ENCODE measurements at regions of chr11 and their contacts with region 1.

Region 1: DNA sequence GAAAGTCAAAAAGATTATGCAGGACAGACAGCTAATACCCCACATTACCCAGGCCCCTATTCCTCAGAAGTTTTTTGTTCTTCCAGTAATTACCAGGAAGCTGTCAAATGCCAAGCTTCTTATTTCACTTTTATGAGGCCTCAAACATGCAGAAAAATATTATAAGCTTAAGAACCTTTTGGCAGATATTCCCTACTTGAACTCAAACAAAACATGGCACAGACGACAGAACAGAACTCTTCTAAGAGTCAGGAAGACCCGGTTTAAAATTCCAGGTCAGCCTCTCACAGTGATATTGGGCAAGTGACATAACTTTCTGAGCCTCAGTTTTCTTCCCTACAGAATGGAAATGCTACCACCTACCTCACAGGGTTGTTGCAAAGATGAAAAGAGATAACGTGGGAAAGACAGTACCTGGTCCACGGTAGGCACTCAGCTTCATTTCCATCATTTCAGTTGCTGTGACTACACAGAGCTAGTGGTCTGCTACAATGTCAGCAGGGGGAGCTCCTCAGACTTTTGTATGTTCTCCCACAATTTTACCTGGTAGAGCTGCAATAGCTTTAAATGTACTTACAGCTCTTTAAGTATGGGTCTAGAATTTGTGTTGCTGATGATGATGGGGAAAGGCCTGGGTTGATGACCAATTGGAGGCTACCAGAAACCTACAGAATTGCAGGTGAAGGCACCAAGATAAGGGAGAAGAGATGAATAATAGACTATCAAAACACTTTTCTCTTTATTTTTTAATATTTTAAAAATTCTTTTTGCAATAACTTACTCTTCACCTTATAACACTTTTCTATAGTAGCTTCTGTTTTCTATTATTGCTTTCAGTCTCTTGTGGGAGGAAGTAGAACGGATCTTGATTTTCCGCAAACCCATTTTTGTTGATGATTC is 98.3 kb upstream of the CHRM4 start:
- DNase-seq: no peak
- H3K4me3 ChIP-seq: no peak overlapping the region
- H3K27me3 ChIP-seq: no peaks in the 10 kb centered on the region
- CTCF ChIP-seq: peak; percentile 67

Region 2: DNA sequence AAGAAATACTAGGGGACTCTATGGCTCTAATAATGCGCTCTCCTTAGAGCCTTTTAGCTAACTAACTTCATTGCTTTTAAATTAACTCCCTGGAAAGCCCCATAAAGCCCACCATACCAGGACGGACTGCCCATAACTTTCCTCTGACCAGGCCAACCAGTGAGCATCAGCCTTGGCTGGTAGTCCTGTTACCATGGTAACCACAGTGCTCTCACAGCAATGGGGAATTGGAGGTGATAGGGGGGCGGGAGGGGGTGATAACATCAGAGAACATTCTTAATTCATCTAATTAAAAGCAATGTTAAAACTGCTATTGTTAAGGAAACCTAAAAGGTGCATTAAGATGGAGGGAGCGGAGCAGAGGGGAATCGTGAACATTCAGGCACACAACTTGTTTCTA is 71.2 kb before region 1 on chr11:
- CTCF ChIA-PET with region 1: no interaction called
- POLR2A ChIA-PET with region 1: no interaction called
- DNase-seq: no peak
- H3K4me3 ChIP-seq: no peak overlapping the region
- H3K27me3 ChIP-seq: no peaks in the 10 kb centered on the region
- CTCF ChIP-seq: no peak

Region 3: GRCh38 chr11:46445920-46446771 is 43.8 kb before region 1 on chr11:
- CTCF ChIA-PET with region 1: interaction called, 9 read pairs
- POLR2A ChIA-PET with region 1: interaction called, 18 read pairs
- DNase-seq: no peak
- H3K4me3 ChIP-seq: no peak overlapping the region
- H3K27me3 ChIP-seq: no peaks in the 10 kb centered on the region
- CTCF ChIP-seq: peak; percentile 37

Region 4: DNA sequence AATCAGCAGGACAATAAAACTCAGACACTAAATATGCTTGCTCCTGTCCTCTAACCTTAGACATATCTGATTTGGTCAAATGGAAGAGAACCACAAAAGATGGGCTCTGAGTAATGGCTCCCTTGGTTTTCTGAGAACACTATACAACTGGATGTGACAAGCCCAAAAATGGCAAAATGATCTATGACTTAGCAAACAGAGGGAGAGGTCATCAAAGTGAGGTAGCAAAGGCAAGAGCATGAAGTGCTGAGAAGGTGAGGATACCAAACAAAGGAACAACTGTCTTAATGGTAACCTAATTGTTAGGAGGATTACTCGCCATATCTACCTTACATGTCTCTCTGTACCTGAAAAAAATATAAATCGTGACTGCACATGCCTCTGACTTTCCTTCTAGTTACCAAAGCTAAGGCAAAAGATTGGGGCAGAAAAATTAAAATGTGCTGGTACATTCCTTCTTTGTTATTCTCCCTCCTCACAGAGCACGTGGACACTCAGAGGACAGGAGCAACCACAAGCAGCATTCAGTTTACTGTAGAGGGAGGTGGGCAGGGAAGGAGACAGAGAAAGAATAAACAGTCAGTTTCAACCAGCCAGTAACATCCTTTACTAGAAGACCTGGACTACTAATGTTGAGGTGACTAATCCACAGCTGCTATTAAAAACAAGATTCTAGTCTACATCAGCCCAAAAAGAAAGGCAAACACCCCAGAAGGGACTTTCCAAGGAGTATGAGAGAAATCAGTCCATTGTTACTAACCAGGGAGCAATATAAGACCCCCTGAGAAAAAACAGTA is 15.1 kb after region 1 on chr11:
- CTCF ChIA-PET with region 1: interaction called, 11 read pairs
- POLR2A ChIA-PET with region 1: no interaction called
- DNase-seq: no peak
- H3K4me3 ChIP-seq: no peak overlapping the region
- H3K27me3 ChIP-seq: no peaks in the 10 kb centered on the region; the same call in 1 of the 2 replicates
- CTCF ChIP-seq: no peak

Region 5: DNA sequence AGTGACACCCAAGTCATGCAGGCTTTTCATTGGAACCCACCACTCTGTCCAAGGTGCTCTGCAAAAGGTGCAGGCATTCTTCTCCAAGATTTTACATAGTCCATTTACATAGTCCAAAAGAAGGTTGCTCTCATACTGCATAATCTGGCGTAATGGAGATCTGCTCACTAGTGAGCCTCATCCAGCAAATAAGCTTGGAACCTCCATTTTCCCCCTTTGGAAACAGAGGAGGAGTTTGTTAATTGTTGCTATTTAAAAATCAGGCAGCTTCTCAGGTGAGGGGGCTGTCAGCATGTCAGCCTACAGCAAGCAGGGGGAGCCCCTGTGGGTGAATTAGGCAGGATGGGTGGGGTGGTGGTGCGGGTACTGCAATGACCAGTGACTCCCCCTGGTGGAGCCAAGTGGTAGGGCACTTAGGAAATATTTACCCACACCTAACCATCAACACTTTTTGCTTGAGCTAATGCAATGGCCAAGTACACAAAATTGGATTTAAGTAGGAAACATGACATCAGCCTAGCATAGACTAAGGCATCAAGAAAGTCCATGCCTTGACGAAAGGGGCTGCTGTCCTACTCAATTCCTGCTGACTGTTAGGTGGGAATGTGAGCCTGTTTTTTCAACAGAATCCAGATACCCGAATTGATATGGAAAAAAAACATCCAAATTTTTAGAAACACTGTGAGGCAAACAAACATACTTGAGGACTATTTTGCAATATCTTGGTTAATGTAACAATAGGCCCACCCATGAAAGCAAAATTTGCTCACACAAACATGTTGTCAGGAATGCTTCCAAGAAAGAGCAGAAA is 39.4 kb after region 1 on chr11:
- CTCF ChIA-PET with region 1: interaction called, 17 read pairs
- POLR2A ChIA-PET with region 1: no interaction called
- DNase-seq: no peak
- H3K4me3 ChIP-seq: no peak overlapping the region
- H3K27me3 ChIP-seq: no peaks in the 10 kb centered on the region
- CTCF ChIP-seq: peak; percentile 95

Measured in BJ (cell line).